PC-3 (cell line): ENCODE measurements at regions of chr6 and their contacts with region 1.

Region 1: DNA sequence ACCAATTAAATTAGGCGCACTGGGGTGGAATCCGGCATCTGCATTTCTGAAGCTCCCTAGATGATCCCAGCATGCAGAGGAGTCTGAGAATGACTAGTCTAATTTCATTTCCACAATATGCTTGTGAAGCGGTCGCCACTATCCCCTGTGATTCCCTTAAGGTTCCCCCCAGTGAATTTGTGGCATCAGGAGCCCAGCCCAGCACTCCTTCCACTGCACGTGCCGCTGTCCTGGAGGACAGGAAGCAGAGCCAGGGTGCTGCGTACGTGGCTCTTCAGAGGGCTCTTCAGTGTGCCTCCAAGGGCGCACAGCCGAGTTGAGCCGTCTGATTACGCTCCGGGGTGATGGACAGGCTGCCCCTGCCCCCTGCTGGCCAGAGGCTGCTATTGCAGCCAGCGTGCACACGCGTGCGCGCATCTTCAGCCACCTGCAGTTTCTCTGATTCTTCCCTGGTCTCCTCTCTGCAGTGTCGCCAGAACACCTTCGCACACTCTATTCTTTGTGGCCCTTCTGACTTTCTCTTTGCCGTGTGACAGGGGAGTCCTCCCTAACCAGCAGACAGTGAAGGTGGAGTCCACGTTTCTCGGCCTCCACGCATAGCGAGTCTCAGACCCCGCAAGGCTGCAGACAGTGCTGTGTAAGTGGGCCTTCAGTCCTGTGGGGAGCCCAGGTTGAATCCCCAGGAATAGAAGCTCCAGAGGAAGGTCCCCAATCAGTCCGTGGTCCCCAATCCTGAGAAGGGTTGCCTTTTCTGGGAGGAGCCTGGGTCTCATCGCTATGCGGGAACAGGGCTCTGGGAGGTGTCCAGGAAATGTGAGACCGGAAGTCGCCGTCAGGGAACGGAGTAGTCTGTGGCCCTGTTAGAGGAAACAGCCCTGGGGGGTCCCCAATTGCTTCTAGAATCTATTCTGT is 16.5 kb upstream of the NCR2 start:
- DNase-seq: peak; percentile 84
- ATAC-seq: peak; percentile 72
- H3K4me3 ChIP-seq: peak overlapping the region; percentile 65
- H3K27ac ChIP-seq: no peak overlapping the region
- H3K4me1 ChIP-seq: peaks cover 18% of the 10 kb centered on the region
- H3K27me3 ChIP-seq: peaks cover 38% of the 10 kb centered on the region
- CTCF ChIP-seq: peak; percentile 97

Region 2: DNA sequence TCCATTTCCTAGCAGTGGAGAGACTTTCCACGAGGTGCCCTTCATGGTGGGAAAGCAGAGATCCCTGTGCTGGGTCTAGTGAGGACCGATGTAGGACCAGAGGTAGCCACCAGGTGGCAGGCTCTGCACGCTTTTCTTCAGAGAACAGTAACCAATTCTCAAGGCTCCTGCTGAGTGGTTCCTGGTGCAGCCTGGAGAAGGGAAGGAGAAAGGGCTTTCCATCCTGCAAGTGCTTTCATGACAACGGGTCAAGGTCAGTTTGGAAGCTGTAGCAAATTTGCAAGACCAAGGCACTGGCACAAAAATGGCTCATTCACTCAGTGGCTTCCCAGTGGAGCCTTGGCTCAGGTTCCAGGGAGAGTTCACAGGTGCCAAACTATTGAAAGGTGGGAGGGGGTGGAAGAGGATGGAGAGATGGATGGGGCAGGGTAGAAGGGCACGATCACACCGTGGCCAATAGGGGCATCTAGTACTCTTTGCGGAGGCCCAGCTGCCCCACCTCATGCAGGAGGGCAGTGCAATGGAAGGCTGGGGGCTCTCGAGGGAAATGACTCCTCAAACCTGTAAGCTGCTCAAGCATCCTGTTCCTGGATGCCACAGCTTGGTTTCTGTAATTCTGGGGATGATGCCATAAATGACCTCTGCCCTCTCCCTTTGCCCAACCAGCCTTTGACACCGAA is 1970.9 kb before region 1 on chr6:
- CTCF ChIA-PET with region 1: no interaction called
- POLR2A ChIA-PET with region 1: no interaction called
- intact Hi-C with region 1: loop called (anchors 10 kb)
- DNase-seq: peak; percentile 73
- ATAC-seq: peak; percentile 88
- H3K4me3 ChIP-seq: no peak overlapping the region
- H3K27ac ChIP-seq: no peak overlapping the region
- H3K4me1 ChIP-seq: no peaks in the 10 kb centered on the region
- H3K27me3 ChIP-seq: peaks cover 27% of the 10 kb centered on the region
- CTCF ChIP-seq: peak; percentile 88

Region 3: GRCh38 chr6:41072676-41073623 is 246.0 kb before region 1 on chr6 and contains the start of gene NFYA:
- CTCF ChIA-PET with region 1: no interaction called
- POLR2A ChIA-PET with region 1: interaction called, 4 read pairs
- intact Hi-C with region 1: loop called (anchors 5 kb)
- DNase-seq: peak; percentile 99
- ATAC-seq: peak; percentile 65
- H3K4me3 ChIP-seq: peak within 1 kb of the TSS; percentile 85
- H3K27ac ChIP-seq: peak within 1 kb of the TSS; percentile 96
- H3K4me1 ChIP-seq: peaks cover 46% of the 10 kb centered on the region
- H3K27me3 ChIP-seq: no peaks in the 10 kb centered on the region
- CTCF ChIP-seq: no peak
- total RNA-seq, gene NFYA: 31.7 and 32.9 TPM in 2 replicates

Region 4: DNA sequence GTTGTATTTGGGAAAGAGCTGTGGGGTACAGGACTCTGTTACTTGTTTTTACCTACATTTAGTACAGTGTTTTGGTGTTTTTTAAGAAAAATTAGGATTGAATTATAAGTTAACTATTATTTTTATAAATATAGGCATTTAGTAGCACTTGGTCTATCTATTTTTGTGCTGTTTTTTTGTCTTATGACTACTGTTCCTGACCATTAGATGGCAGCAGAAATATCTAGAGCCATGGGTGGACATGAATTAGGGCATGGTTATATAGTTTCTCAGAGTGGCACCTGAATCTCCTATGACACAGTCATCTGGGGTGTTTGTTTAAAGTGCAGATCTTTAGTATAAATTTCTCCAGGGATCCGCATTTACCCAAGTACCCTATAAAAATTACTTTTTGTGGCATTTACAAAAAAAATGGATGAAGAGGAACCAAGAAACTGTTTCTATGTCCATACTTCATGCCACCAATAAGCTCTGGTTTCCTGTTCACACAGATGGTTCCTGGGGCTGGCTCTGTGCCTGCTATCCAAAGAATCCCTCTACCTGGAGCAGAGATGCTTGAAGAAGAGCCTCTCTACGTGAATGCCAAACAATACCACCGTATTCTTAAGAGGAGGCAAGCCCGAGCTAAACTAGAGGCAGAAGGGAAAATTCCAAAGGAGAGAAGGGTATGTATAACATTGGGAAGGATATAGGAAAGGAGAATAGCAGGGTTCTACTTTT is 226.3 kb before region 1 on chr6:
- CTCF ChIA-PET with region 1: no interaction called
- POLR2A ChIA-PET with region 1: no interaction called
- intact Hi-C with region 1: loop called (anchors 5 kb)
- DNase-seq: peak; percentile 41
- ATAC-seq: peak; percentile 51; the same call in 1 of the 2 replicates
- H3K4me3 ChIP-seq: no peak overlapping the region
- H3K27ac ChIP-seq: no peak overlapping the region
- H3K4me1 ChIP-seq: no peaks in the 10 kb centered on the region
- H3K27me3 ChIP-seq: no peaks in the 10 kb centered on the region
- CTCF ChIP-seq: peak; percentile 51

Region 5: DNA sequence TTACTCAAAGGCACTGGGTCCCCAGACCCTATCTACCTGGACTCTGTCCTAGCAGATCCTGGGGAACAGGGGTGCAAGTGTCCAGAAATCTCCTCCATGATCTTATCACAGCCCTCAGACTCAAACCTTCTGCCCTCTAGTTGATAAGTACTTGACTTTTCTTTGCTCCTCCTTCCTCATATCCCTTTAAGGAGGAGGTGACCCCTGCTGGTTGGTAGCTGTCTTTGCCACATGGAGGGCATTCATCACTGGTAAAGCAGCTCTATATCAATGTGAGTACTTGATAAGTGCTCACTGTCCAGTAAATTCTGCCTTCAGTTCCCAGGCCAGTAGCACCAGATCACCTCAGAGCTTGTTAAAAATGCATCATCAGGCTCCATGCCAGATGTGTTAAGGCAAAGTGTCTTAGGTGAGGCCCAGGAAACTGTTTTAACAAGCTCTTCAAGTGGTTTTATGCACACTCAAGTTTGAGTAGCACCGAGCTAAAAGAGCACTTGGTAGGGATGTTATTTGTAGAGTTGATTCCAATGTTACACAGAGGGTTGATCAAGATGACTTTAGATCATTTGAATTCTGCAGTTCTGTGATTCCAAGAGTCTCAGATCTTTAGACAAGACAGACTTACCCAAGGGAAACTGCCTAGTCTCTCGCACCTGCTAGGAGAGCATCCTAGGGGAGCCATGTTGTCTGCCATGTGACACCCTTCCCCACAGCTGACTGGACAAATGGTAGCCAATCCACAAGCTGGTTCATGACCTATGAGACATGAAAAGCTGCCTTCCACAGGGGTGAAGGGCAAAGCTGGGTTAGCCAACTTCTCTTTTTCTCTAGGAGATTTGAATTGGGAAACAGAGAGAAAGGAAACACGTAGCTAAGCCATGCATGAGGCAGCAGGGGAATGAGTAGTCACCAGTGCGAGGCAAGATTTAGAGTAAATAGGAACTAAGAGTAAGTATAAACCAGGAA is 136.6 kb before region 1 on chr6:
- CTCF ChIA-PET with region 1: no interaction called
- POLR2A ChIA-PET with region 1: no interaction called
- intact Hi-C with region 1: loop called (anchors 2 kb)
- DNase-seq: peak; percentile 62
- ATAC-seq: peak; percentile 98
- H3K4me3 ChIP-seq: no peak overlapping the region
- H3K27ac ChIP-seq: no peak overlapping the region
- H3K4me1 ChIP-seq: no peaks in the 10 kb centered on the region
- H3K27me3 ChIP-seq: peaks cover 40% of the 10 kb centered on the region
- CTCF ChIP-seq: peak; percentile 71

Region 6: DNA sequence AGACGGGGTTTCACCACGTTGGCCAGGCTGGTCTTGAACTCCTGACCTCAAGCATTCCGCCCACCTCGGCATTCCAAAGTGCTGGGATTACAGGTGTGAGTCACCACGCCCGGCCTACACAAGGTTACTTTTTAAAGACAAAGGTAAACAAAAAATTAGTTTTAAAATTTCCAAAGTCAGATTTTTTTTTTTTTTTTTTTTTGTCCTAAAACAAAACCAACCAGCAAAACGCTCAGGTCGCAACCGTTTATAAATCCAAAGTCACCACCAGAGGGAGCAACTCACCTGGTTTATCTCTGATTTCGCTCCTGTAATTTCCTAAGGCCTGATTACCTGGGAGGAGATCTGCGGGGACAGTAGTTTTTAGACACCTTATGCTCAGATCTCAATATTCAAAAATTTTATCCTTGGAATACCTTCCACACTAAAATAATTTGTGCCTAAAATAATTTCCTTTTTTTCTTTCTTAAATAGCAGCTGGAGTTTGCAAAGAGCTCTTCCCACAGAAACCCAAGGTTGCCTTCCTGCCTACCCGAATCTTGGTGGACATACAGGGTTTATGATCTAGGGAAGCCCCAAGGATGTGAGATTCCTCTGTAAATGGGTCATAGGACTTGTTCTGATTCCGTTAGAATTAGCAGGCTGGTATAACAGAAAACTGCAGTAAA is 12.6 kb before region 1 on chr6:
- CTCF ChIA-PET with region 1: interaction called, 6 read pairs
- POLR2A ChIA-PET with region 1: no interaction called
- intact Hi-C with region 1: loop called (anchors 1 kb)
- DNase-seq: peak; percentile 82
- ATAC-seq: peak; percentile 53; the same call in 1 of the 2 replicates
- H3K4me3 ChIP-seq: no peak overlapping the region
- H3K27ac ChIP-seq: no peak overlapping the region
- H3K4me1 ChIP-seq: 0 out of 2 replicates have a peak, but pooled peaks cover 4% of the 10 kb centered on the region
- H3K27me3 ChIP-seq: peaks cover 10% of the 10 kb centered on the region; the same call in 1 of the 2 replicates
- CTCF ChIP-seq: peak; percentile 76

Region 7: GRCh38 chr6:41494212-41495110 is 175.6 kb after region 1 on chr6:
- CTCF ChIA-PET with region 1: no interaction called
- POLR2A ChIA-PET with region 1: no interaction called
- intact Hi-C with region 1: no loop called
- DNase-seq: no peak
- ATAC-seq: no peak
- H3K4me3 ChIP-seq: no peak overlapping the region
- H3K27ac ChIP-seq: no peak overlapping the region
- H3K4me1 ChIP-seq: no peaks in the 10 kb centered on the region
- H3K27me3 ChIP-seq: peaks cover 15% of the 10 kb centered on the region
- CTCF ChIP-seq: no peak

Region 8: GRCh38 chr6:41585605-41586004 is 266.7 kb after region 1 on chr6:
- CTCF ChIA-PET with region 1: no interaction called
- POLR2A ChIA-PET with region 1: no interaction called
- intact Hi-C with region 1: no loop called
- DNase-seq: no peak
- ATAC-seq: no peak
- H3K4me3 ChIP-seq: no peak overlapping the region
- H3K27ac ChIP-seq: no peak overlapping the region
- H3K4me1 ChIP-seq: peaks cover 15% of the 10 kb centered on the region
- H3K27me3 ChIP-seq: no peaks in the 10 kb centered on the region
- CTCF ChIP-seq: no peak